ENCODE measurements at regions of chr17 and their contacts with region 1.

Region 1: DNA sequence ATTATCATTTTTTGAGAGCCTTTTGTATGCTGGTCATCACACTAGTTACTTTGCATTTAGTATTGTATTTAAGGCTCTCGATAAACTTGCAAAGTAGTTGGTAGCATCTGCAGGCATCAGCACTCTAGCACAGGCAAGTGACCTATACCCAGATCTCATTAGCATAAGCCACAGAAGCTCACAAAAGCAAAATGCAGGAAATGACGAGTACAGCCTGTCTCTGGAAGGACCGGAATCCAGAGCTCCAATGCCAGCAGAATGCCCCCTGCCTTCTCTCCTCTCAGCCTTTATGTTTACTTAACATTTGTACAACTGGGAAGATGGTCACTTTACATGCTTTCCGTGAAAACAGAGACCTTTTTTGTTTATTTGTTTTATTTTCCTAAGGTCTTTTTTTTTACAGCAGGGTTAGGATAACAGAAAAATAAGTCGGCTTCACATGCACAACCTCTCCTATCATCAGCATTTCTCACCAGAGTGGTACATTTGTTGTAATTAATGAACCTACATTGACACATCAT is 45.4 kb upstream of the MYOCD start:
- DNase-seq: no peak
- ATAC-seq: no peak
- H3K4me3 ChIP-seq: no peak overlapping the region
- H3K27ac ChIP-seq: no peak overlapping the region
- H3K4me1 ChIP-seq: peaks cover 0 to 12% (median 0%) of the 10 kb centered on the region in 12 donors
- H3K27me3 ChIP-seq: no peaks in the 10 kb centered on the region
- CTCF ChIP-seq: no peak
- POLR2A ChIP-seq: no peak

Region 2: GRCh38 chr17:12580640-12581039 is 39.6 kb before region 1 on chr17:
- intact Hi-C with region 1: loop called in 1 of 10 experiments (anchors 5 kb)
- DNase-seq: no peak
- ATAC-seq: peak in 3 of 4 donors; percentile 43 to 59 (median 47)
- H3K4me3 ChIP-seq: peak overlapping the region in 3 of 12 donors; percentile 2 to 10 (median 3)
- H3K27ac ChIP-seq: peak overlapping the region in 7 of 12 donors; percentile 6 to 63 (median 41)
- H3K4me1 ChIP-seq: peaks cover 0 to 22% (median 7%) of the 10 kb centered on the region in 12 donors
- H3K27me3 ChIP-seq: no peaks in the 10 kb centered on the region
- CTCF ChIP-seq: no peak
- POLR2A ChIP-seq: no peak

Region 3: DNA sequence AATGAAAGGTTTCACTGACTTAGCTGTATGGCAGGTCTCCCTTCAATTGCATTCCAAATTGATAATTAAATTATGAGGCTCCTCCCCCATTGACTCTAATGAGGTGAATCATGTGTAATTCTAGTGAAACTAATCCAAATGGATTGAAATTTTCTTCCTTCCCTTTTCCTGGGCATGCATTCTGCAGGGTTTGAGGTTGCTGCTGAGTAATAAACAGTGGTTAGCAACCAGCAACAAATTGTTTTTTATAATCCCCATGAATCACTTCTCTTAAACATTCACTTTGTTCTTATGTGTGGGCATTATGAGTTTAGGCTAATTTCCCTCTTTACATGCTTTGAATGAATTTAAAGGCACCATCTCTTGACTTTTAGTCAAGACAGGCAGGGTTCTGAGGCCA is 88.8 kb after region 1 on chr17:
- intact Hi-C with region 1: no loop called
- DNase-seq: no peak
- ATAC-seq: no peak
- H3K4me3 ChIP-seq: no peak overlapping the region
- H3K27ac ChIP-seq: no peak overlapping the region
- H3K4me1 ChIP-seq: peaks cover 0 to 25% (median 7%) of the 10 kb centered on the region in 12 donors
- H3K27me3 ChIP-seq: no peaks in the 10 kb centered on the region
- CTCF ChIP-seq: no peak
- POLR2A ChIP-seq: no peak

Region 4: DNA sequence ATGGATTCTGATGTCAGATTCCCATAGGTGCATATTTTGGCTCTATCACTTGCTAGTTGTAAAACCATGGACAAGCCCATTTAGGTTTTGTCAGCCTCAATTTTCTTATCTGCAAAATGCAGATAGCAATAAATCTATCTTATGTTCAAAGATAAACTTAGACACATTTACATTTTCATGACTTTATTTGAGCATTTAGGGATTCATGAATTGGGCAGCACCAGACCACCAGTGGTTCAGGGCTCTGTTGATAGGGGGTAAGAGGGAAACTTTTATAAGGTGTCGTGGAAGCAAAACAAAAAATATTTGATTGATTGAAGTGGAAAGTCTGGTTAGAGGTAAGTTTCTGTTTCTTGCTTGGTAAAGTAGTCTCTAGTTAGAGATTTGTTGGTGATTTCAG is 186.4 kb after region 1 on chr17:
- intact Hi-C with region 1: no loop called
- DNase-seq: no peak
- ATAC-seq: no peak
- H3K4me3 ChIP-seq: no peak overlapping the region
- H3K27ac ChIP-seq: no peak overlapping the region
- H3K4me1 ChIP-seq: peaks cover 0 to 8% (median 0%) of the 10 kb centered on the region in 12 donors
- H3K27me3 ChIP-seq: no peaks in the 10 kb centered on the region
- CTCF ChIP-seq: no peak
- POLR2A ChIP-seq: no peak

Measured in heart left ventricle (tissue), 16 donors.